ENCODE measurements at regions of chrX and their contacts with region 1.

Region 1: DNA sequence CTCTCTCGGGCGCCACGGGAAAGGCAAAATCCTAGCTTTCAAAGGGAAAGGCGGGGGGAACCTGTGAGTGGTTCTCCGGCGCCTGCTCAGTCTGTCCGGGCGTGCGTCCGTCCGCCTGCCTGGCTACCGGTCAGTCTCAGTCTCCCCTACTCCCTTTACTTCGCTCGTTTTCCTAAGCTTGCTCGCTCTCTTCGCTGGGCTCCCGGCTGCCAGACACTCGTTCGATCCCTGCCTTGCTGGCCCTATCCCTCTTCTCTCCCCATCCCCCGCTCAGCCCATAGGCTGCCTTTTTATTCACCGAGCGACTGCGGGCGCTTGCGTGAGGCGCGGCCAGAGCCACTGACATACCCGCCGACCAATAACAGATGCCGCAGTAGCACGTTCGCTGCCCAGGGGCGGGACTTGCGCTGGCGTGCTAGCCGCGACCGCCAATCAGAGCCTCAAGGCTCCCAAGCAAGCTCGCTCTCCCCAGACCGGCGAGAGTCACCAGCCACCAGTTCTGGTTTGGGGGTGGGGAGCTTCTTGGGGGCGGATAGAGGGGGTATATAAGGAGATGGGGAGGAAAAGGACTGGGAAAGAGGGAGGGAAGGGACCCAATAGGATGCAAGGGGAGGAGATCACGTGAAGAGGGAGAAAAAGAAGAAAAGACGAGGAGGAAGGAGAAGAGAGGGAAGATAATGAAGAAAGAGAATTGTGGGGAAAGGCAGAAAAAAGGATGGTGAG is 30.0 kb downstream of the ARHGEF9 start:
- DNase-seq: peak; percentile 85
- ATAC-seq: peak; percentile 97
- H3K4me3 Mint-ChIP-seq: peak overlapping the region; percentile 95
- H3K27ac Mint-ChIP-seq: peak overlapping the region; percentile 98
- H3K4me1 Mint-ChIP-seq: peaks cover 31% of the 10 kb centered on the region
- H3K27me3 Mint-ChIP-seq: no peaks in the 10 kb centered on the region

Region 2: DNA sequence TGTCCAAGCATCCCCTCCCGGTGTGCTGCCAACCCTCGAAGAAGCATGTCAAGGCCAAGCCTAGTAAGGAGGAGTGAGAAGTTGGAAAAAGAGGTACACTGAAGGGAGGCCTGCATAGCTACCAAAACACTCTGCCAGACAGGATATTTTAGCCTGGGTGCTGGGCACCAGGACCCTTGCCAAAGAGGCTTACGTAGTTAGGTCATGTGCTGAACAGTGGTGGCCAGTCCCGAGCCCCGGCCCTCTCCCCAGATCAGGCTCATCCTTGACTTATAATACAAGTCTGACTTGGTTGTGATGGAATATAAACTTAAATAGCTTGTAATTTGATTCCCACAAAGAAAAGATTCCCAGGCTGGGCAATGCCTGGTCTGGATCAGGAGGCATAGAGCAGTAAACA is 119.3 kb before region 1 on chrX:
- POLR2A ChIA-PET with region 1: no interaction called
- DNase-seq: no peak
- ATAC-seq: no peak
- H3K4me3 Mint-ChIP-seq: no peak overlapping the region
- H3K27ac Mint-ChIP-seq: no peak overlapping the region
- H3K4me1 Mint-ChIP-seq: no peaks in the 10 kb centered on the region
- H3K27me3 Mint-ChIP-seq: no peaks in the 10 kb centered on the region

Region 3: DNA sequence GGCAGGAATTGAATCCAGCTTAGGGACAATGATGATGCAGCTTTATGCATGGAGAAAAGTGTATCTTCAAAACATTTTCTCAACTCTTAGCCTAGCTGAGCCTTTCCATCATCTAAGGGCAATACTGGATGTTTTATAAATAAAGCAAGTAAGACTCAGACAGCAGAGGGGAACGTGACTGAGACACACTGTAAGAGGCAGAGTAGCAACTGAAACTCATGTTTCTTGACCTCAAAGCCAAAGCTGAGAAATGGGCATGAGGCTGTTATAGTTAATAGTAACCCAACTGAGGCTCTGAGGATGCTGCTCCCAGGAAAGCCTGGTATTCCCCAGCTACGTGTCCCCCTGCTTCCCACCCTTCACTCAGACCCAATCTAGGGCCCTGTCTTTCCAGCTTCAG is 14.6 kb before region 1 on chrX:
- POLR2A ChIA-PET with region 1: interaction called, 57 read pairs
- DNase-seq: no peak
- ATAC-seq: no peak
- H3K4me3 Mint-ChIP-seq: no peak overlapping the region
- H3K27ac Mint-ChIP-seq: no peak overlapping the region
- H3K4me1 Mint-ChIP-seq: peaks cover 62% of the 10 kb centered on the region
- H3K27me3 Mint-ChIP-seq: no peaks in the 10 kb centered on the region